ENCODE measurements at regions of chr4 and their contacts with region 1.

Region 1: GRCh38 chr4:110344162-110344561 is 131.8 kb upstream of the ENPEP start:
- DNase-seq: peak; percentile 30

Region 2: GRCh38 chr4:110270492-110271197 is 73.5 kb before region 1 on chr4:
- CTCF ChIA-PET with region 1: no interaction called
- POLR2A ChIA-PET with region 1: no interaction called
- DNase-seq: no peak

Region 3: DNA sequence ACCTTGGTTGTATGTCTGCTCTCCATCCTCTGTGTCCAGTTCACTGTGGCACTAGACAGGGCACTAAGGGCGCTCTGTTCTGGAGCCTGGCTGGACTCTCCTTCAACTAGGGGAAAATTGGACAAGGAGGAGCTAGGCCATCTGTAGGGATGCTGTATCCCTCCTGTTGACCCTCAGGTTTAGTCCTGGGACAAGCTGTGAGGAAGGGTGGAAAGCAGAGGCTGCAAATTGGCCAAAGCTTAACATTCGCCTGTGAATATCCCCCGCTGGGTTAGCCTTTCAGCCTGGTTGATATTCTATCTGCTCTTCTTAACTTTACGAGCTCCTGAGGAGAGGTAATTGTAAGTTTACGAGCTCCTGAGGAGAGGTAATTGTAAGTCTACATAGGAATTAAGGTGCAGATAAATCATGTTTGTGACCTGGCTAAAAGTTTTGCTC is 67.4 kb after region 1 on chr4:
- CTCF ChIA-PET with region 1: interaction called, 3 read pairs
- POLR2A ChIA-PET with region 1: interaction called, 13 read pairs
- DNase-seq: peak; percentile 78